Heart left ventricle (tissue), 16 donors: ENCODE measurements at regions of chr12 and their contacts with region 1.

Region 1: DNA sequence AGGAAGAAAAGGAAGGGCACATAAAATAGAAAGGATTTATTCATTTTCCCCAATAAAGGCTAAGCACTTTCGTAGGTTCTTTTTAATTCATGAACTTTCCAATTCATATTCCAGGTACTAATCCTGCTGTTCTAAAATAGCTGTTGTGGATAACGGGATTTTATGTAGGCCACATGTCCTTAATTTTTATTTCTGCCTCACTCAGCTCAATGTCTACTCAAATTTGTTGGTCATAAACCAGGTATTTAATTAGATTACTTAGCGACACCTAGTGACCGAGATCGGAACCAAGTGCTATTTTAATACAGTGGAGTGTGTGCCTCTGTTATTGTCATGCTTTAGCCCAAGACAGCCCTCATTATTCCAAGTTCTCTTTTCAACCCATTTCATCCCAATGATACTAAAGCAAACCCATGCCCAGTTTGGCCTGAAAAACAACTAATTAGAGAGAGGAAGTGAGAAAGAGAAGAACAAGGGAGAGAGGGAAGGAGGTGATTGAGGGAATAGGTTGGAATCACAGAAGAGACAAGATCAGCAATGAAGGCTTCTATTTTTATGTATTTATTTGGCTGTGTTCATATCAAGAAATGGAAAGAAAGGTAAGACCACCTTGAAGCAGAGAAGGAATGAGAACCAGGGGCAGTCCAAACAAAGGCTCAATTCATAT is 45.9 kb upstream of the IFNG-AS1 start:
- DNase-seq: peak in 4 of 5 donors; percentile 31 to 68 (median 65)
- ATAC-seq: peak; percentile 63 to 88 (median 86)
- H3K4me3 ChIP-seq: no peak overlapping the region
- H3K27ac ChIP-seq: peak overlapping the region in 8 of 12 donors; percentile 6 to 65 (median 28)
- H3K4me1 ChIP-seq: peaks cover 0 to 25% (median 7%) of the 10 kb centered on the region in 12 donors
- H3K27me3 ChIP-seq: no peaks in the 10 kb centered on the region
- CTCF ChIP-seq: peak; percentile 63 to 85 (median 78)
- POLR2A ChIP-seq: no peak

Region 2: DNA sequence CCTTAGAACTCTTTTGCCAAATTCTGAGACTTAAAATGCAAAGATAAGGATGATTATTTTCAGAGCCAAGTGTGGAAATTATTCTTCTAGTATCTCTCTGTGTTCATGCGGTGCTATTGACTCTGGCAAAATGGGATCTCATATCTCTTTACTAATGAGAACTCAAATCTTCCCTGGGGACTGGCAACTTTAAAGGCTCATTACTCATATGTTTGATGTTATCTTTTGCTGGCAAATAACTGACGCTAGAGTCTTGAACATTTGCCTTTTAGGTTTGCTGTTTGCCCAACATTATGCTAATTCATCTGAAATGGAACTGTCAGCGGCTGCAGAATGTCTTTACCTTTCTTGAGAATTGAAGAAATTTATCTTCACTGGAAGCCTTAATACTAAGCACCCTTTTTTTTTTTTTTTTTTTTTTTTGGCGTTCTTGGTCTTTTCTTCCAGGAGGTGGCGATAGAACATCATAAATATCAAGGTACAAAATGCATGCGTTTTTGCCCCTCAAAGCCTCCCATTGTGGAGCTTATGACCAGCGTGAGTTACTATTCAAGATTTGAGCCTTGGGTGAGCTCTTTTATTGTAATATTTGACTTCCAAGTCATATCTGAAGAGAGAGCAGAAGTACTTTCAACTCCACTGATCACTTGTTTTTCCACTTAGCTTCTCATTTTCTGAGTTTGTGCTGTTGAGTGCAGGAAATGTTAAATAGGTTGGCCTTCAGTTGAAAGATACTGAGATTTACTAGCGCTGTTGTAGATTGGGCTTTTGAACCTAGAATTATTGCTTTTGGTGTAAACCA is 587.6 kb before region 1 on chr12:
- intact Hi-C with region 1: loop called (anchors 1 to 5 kb)
- DNase-seq: no peak
- ATAC-seq: peak in 3 of 4 donors; percentile 47 to 67 (median 60)
- H3K4me3 ChIP-seq: peak overlapping the region in 1 of 12 donors; percentile 3
- H3K27ac ChIP-seq: peak overlapping the region in 6 of 12 donors; percentile 16 to 52 (median 45)
- H3K4me1 ChIP-seq: peaks cover 0 to 58% (median 31%) of the 10 kb centered on the region in 12 donors
- H3K27me3 ChIP-seq: no peaks in the 10 kb centered on the region
- CTCF ChIP-seq: peak; percentile 41 to 75 (median 64)
- POLR2A ChIP-seq: no peak

Region 3: GRCh38 chr12:67433385-67434175 is 509.8 kb before region 1 on chr12:
- intact Hi-C with region 1: loop called in 7 of 10 experiments (anchors 1 to 5 kb)
- DNase-seq: no peak
- ATAC-seq: no peak
- H3K4me3 ChIP-seq: no peak overlapping the region
- H3K27ac ChIP-seq: peak overlapping the region in 8 of 12 donors; percentile 30 to 80 (median 70)
- H3K4me1 ChIP-seq: peaks cover 0 to 36% (median 24%) of the 10 kb centered on the region in 12 donors
- H3K27me3 ChIP-seq: no peaks in the 10 kb centered on the region
- CTCF ChIP-seq: no peak
- POLR2A ChIP-seq: no peak

Region 4: DNA sequence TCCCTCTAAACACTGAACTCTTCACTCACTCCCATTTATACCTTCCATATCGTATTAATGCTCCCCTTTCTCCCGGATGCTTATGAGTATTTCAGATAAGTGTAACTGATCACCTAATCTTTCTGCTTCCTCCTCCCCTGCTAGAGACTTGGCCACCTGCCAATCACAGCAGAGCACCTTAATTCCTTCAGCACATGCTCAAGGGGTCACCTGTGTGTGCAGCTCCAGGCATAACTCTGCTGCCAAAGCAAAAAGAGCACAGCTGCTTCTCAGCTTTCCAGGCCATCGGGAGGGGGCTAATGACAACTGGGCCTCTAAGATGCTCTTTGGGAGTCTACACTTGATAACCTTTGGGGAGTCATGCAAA is 401.8 kb before region 1 on chr12:
- intact Hi-C with region 1: loop called in 1 of 10 experiments (anchors 10 kb)
- DNase-seq: no peak
- ATAC-seq: no peak
- H3K4me3 ChIP-seq: no peak overlapping the region
- H3K27ac ChIP-seq: no peak overlapping the region
- H3K4me1 ChIP-seq: no peaks in the 10 kb centered on the region
- H3K27me3 ChIP-seq: no peaks in the 10 kb centered on the region
- CTCF ChIP-seq: no peak
- POLR2A ChIP-seq: no peak

Region 5: GRCh38 chr12:67720351-67720856 is 223.0 kb before region 1 on chr12:
- intact Hi-C with region 1: loop called in 2 of 10 experiments (anchors 5 kb)
- DNase-seq: peak in 4 of 5 donors; percentile 52 to 70 (median 61)
- ATAC-seq: peak; percentile 62 to 84 (median 80)
- H3K4me3 ChIP-seq: no peak overlapping the region
- H3K27ac ChIP-seq: peak overlapping the region in 11 of 12 donors; percentile 46 to 83 (median 65)
- H3K4me1 ChIP-seq: peaks cover 0 to 35% (median 19%) of the 10 kb centered on the region in 12 donors
- H3K27me3 ChIP-seq: no peaks in the 10 kb centered on the region
- CTCF ChIP-seq: no peak
- POLR2A ChIP-seq: no peak